Activated naive CD8-positive, alpha-beta T cell treated with anti-CD3 and anti-CD28 coated beads, Interleukin-2, amount 10 ng/mL, durations not matched to agents 7 days and 5 days (primary cell): ENCODE measurements at regions of chr17 and their contacts with region 1.

Region 1: GRCh38 chr17:2029911-2030778 is at the start of gene DPH1:
- DNase-seq: peak; percentile 85
- ATAC-seq: peak; percentile 91
- H3K4me3 Mint-ChIP-seq: peak within 1 kb of the TSS; percentile 95
- H3K27ac Mint-ChIP-seq: peak within 1 kb of the TSS; percentile 80
- H3K4me1 Mint-ChIP-seq: peaks cover 8% of the 10 kb centered on the region
- H3K27me3 Mint-ChIP-seq: peaks cover 36% of the 10 kb centered on the region
- total RNA-seq, gene DPH1: 45.7 to 46.4 TPM

Region 2: DNA sequence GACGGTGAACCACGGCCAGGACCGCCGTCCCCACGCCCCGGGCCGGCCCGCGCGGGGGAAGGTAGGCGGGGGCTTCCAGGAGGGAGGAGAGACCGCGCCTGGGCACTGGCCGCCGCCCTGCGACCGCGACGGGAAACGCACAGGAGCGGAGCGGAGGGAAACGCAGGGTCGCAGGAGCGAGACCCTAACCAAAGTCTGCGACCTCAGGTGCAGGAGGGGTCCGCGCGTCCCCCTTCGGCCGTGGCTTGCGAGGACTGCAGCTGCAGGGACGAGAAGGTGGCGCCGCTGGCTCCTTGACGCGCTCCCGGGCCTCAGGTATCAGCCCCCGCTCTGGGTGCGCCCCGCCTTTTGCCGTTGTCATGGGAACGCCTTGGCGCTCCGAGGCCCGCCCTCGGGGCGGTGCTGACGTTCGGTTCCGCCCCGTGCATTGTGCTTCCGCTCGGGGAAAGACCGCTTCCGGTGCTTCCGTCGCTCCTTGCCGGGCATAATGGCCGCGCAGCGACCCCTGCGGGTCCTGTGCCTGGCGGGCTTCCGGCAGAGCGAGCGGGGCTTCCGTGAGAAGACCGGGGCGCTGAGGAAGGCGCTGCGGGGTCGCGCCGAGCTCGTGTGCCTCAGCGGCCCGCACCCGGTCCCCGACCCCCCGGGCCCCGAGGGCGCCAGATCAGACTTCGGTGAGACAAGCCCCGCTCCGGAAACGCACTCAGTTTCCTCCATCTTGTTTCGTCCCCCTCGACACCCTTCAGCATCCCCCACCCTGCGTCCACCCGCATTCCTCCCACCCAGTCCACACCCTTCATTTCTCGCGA is 11.6 kb after region 1 on chr17 and contains the start of gene OVCA2:
- POLR2A ChIA-PET with region 1: interaction called, 13 read pairs
- DNase-seq: peak; percentile 98
- ATAC-seq: peak; percentile 83
- H3K4me3 Mint-ChIP-seq: peak within 1 kb of the TSS; percentile 93
- H3K27ac Mint-ChIP-seq: peak within 1 kb of the TSS; percentile 96
- H3K4me1 Mint-ChIP-seq: peaks cover 12% of the 10 kb centered on the region
- H3K27me3 Mint-ChIP-seq: no peaks in the 10 kb centered on the region
- total RNA-seq, gene OVCA2: 32.0 to 35.5 TPM